ENCODE measurements at regions of chr16 and their contacts with region 1.

Region 1: GRCh38 chr16:67546761-67547422 is 15.4 kb upstream of the CTCF start:
- DNase-seq: no peak
- ATAC-seq: peak; percentile 76
- H3K4me3 ChIP-seq: no peak overlapping the region
- H3K27ac ChIP-seq: no peak overlapping the region
- H3K4me1 ChIP-seq: peaks cover 9% of the 10 kb centered on the region; the same call in 1 of the 2 replicates
- H3K27me3 ChIP-seq: no peaks in the 10 kb centered on the region
- CTCF ChIP-seq: peak; percentile 91

Region 2: GRCh38 chr16:67561824-67562525 is 15.1 kb after region 1 on chr16:
- CTCF ChIA-PET with region 1: interaction called, 4 read pairs
- POLR2A ChIA-PET with region 1: interaction called, 15 read pairs
- in situ Hi-C with region 1: no loop called
- intact Hi-C with region 1: no loop called
- DNase-seq: peak; percentile 65
- ATAC-seq: peak; percentile 94
- H3K4me3 ChIP-seq: peak overlapping the region; percentile 78 to 82
- H3K27ac ChIP-seq: peak overlapping the region; percentile 89
- H3K4me1 ChIP-seq: peaks cover 11% of the 10 kb centered on the region
- H3K27me3 ChIP-seq: no peaks in the 10 kb centered on the region
- CTCF ChIP-seq: no peak

Region 3: GRCh38 chr16:67641779-67642708 is 95.2 kb after region 1 on chr16:
- CTCF ChIA-PET with region 1: interaction called, 3 read pairs
- POLR2A ChIA-PET with region 1: no interaction called
- in situ Hi-C with region 1: no loop called
- intact Hi-C with region 1: loop called (anchors 10 kb)
- DNase-seq: no peak
- ATAC-seq: peak; percentile 39; the same call in 1 of the 2 replicates
- H3K4me3 ChIP-seq: no peak overlapping the region
- H3K27ac ChIP-seq: no peak overlapping the region
- H3K4me1 ChIP-seq: no peaks in the 10 kb centered on the region
- H3K27me3 ChIP-seq: no peaks in the 10 kb centered on the region
- CTCF ChIP-seq: no peak